Activated CD8-positive, alpha-beta T cell treated with anti-CD3 and anti-CD28 coated beads, Interleukin-2, amount 10 ng/mL, durations not matched to agents 7 days and 5 days (primary cell): ENCODE measurements at regions of chr14 and their contacts with region 1.

Region 1: GRCh38 chr14:36070031-36070719 is 106.3 kb downstream of the PTCSC3 start:
- DNase-seq: peak; percentile 55
- ATAC-seq: peak; percentile 58
- H3K4me3 Mint-ChIP-seq: no peak overlapping the region
- H3K27ac Mint-ChIP-seq: no peak overlapping the region
- H3K4me1 Mint-ChIP-seq: peaks cover 5% of the 10 kb centered on the region
- H3K27me3 Mint-ChIP-seq: peaks cover 16% of the 10 kb centered on the region

Region 2: GRCh38 chr14:35565871-35566464 is 504.2 kb before region 1 on chr14:
- CTCF ChIA-PET with region 1: no interaction called
- POLR2A ChIA-PET with region 1: no interaction called
- DNase-seq: no peak
- ATAC-seq: no peak
- H3K4me3 Mint-ChIP-seq: no peak overlapping the region
- H3K27ac Mint-ChIP-seq: no peak overlapping the region
- H3K4me1 Mint-ChIP-seq: no peaks in the 10 kb centered on the region
- H3K27me3 Mint-ChIP-seq: no peaks in the 10 kb centered on the region

Region 3: GRCh38 chr14:35747379-35747778 is 322.8 kb before region 1 on chr14:
- CTCF ChIA-PET with region 1: no interaction called
- POLR2A ChIA-PET with region 1: no interaction called
- DNase-seq: no peak
- ATAC-seq: no peak
- H3K4me3 Mint-ChIP-seq: no peak overlapping the region
- H3K27ac Mint-ChIP-seq: no peak overlapping the region
- H3K4me1 Mint-ChIP-seq: peaks cover 17% of the 10 kb centered on the region
- H3K27me3 Mint-ChIP-seq: no peaks in the 10 kb centered on the region

Region 4: DNA sequence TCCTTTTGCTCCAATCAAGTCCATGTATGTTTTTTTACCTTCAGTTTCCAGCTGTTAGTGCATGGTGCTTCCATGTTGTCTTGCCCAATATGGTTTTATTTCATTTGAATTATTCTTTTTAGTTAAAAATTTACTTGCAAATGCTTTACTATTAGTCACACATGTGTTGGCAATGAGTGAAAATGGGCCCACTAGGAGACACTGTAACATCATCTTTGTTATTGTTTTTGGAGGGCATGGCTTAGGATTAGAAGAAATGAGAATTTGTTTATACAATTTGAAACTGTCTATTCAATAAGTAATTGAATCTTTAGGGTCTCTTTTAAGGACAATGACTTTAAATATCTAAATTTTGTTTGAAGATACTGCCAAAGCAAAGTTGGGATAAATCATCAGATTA is 110.3 kb before region 1 on chr14:
- CTCF ChIA-PET with region 1: interaction called, 14 read pairs
- POLR2A ChIA-PET with region 1: no interaction called
- DNase-seq: no peak
- ATAC-seq: no peak
- H3K4me3 Mint-ChIP-seq: no peak overlapping the region
- H3K27ac Mint-ChIP-seq: no peak overlapping the region
- H3K4me1 Mint-ChIP-seq: no peaks in the 10 kb centered on the region
- H3K27me3 Mint-ChIP-seq: peaks cover 11% of the 10 kb centered on the region

Region 5: DNA sequence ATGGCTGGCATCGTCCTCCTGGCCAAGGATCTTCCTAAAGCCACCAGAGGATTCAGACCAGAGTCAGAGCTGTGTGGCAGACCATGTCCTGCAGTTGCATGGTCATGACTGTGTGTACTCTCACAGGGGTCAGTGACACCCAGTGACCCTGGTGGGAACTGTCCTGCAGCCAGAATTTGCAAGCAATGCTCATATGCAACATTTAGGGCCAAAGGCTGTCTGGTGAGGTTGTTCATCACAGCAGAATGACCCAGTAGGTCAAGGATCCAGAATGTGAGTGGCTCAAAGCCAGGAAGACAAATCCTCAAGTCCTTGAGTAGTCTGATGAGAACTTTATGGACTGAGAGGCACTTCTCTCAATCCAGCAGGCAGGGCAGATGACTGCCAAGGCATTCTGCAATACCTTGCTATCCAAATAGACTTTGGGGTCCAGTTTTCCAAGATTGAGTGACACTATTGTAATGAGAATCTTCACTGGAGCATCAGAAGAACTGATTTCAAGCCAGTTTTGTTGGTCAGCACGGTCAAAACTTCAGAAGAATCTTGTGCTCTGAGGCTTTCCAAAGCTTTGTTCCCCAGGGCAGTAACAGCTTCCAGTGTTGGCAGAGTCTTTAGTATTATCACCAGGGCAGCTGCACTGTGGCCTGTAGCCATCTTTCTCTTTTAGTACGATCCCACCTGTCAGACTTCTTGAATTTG is 15.7 kb before region 1 on chr14:
- CTCF ChIA-PET with region 1: interaction called, 15 read pairs
- POLR2A ChIA-PET with region 1: no interaction called
- DNase-seq: no peak
- ATAC-seq: no peak
- H3K4me3 Mint-ChIP-seq: no peak overlapping the region
- H3K27ac Mint-ChIP-seq: no peak overlapping the region
- H3K4me1 Mint-ChIP-seq: no peaks in the 10 kb centered on the region
- H3K27me3 Mint-ChIP-seq: peaks cover 29% of the 10 kb centered on the region

Region 6: DNA sequence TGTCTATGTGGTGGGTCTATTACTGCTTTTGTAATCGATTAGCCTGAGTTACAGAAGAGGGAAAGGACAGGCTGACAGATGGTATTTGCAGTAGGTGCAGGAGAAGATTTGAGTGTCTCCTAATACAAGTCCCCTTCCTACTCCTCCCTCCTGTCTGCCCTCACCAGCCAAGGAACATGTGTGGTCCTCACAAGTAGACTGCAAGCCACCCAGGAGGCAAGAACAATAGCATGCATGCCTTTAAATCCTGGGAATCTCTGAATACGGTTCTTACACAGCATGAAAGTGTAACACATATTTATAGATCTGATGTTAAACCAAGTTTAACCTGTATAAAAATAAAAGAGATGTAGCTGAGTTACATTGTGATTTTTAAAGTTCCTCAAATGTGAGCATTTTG is 10.6 kb before region 1 on chr14:
- CTCF ChIA-PET with region 1: interaction called, 10 read pairs
- POLR2A ChIA-PET with region 1: no interaction called
- DNase-seq: no peak
- ATAC-seq: no peak
- H3K4me3 Mint-ChIP-seq: no peak overlapping the region
- H3K27ac Mint-ChIP-seq: no peak overlapping the region
- H3K4me1 Mint-ChIP-seq: no peaks in the 10 kb centered on the region
- H3K27me3 Mint-ChIP-seq: peaks cover 28% of the 10 kb centered on the region

Region 7: GRCh38 chr14:36373982-36374673 is 304.0 kb after region 1 on chr14:
- CTCF ChIA-PET with region 1: interaction called, 54 read pairs
- POLR2A ChIA-PET with region 1: no interaction called
- DNase-seq: peak; percentile 78
- ATAC-seq: peak; percentile 83
- H3K4me3 Mint-ChIP-seq: no peak overlapping the region
- H3K27ac Mint-ChIP-seq: no peak overlapping the region
- H3K4me1 Mint-ChIP-seq: no peaks in the 10 kb centered on the region
- H3K27me3 Mint-ChIP-seq: peaks cover 4% of the 10 kb centered on the region